BJ (cell line): ENCODE measurements at regions of chr5 and their contacts with region 1.

Region 1: DNA sequence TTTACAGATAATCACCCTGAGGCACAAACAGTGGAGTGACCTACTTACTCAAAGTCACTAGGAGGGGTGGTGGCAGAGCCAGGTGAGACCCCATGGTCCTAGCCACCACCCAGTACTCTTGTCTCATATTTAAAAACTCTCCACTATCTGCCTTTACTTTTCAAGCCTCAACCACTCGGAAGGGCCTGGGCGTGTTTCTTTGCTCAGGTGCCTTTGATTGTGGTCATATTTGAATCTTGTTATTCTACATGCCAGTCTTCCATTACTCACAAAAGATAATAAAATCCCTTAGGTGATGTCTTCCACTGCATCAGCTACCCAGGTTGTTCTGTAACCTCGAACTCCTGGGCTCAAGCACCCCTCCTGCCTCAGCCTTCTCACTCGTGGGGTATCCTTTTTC is 20.7 kb upstream of the TRIM36 start:
- DNase-seq: no peak
- H3K4me3 ChIP-seq: no peak overlapping the region
- H3K27me3 ChIP-seq: no peaks in the 10 kb centered on the region
- CTCF ChIP-seq: no peak

Region 2: DNA sequence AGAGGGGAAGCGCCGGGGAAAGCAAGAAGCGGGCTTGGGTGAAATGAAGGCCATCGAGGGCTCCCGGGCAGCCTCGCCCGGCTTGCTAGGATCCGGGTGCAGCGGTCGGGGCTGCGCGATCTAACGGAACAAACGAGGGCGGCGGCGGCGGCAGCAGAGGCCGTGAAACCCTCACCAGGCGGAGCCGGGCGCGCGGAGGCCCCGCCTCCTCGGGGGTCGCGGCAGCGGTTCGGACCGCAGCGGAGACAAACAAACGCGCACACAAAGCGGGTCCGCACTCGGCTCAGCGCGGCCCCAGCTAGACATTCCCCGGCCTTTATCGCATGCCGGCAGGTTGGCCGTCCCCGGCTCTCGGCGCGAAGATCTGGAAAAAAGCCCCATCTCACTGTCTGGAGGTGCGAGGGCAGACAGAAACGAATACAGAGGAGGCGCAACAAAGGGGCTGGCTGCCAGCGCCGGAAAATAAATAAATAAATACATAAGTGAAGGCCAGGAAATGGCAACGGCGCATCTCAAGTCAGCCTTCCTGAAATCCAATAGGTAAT is 10.2 kb before region 1 on chr5:
- CTCF ChIA-PET with region 1: interaction called, 10 read pairs
- POLR2A ChIA-PET with region 1: no interaction called
- DNase-seq: no peak
- H3K4me3 ChIP-seq: peak overlapping the region; percentile 33
- H3K27me3 ChIP-seq: peaks cover 37% of the 10 kb centered on the region
- CTCF ChIP-seq: no peak